ENCODE measurements at regions of chr21 and their contacts with region 1.

Region 1: GRCh38 chr21:43718872-43719747 is at the start of gene PDXK:
- DNase-seq: peak; percentile 82 to 85
- H3K4me3 ChIP-seq: peak within 1 kb of the TSS; percentile 27 to 99 (median 90)
- H3K27ac ChIP-seq: peak within 1 kb of the TSS; percentile 68 to 93 (median 90)
- H3K4me1 ChIP-seq: peaks cover 24 to 28% of the 10 kb centered on the region in 2 donors
- H3K27me3 ChIP-seq: no peaks in the 10 kb centered on the region
- CTCF ChIP-seq: no peak
- POLR2A ChIP-seq: peak; percentile 88 to 96
- total RNA-seq, gene PDXK: 70.6 to 95.5 (median 92.4) TPM

Region 2: GRCh38 chr21:43664358-43664757 is 54.8 kb before region 1 on chr21:
- intact Hi-C with region 1: loop called (anchors 5 kb)
- DNase-seq: no peak
- H3K4me3 ChIP-seq: no peak overlapping the region
- H3K27ac ChIP-seq: no peak overlapping the region
- H3K4me1 ChIP-seq: peaks cover 7 to 12% of the 10 kb centered on the region in 2 donors
- H3K27me3 ChIP-seq: no peaks in the 10 kb centered on the region
- CTCF ChIP-seq: no peak
- POLR2A ChIP-seq: no peak

Region 3: GRCh38 chr21:43789276-43790009 is 70.3 kb after region 1 on chr21 and contains the start of gene RRP1:
- intact Hi-C with region 1: loop called (anchors 5 kb)
- DNase-seq: peak; percentile 86 to 91
- H3K4me3 ChIP-seq: peak within 1 kb of the TSS; percentile 83 to 92 (median 88)
- H3K27ac ChIP-seq: peak within 1 kb of the TSS; percentile 90 to 96 (median 93)
- H3K4me1 ChIP-seq: peaks cover 10 to 12% of the 10 kb centered on the region in 2 donors
- H3K27me3 ChIP-seq: no peaks in the 10 kb centered on the region
- CTCF ChIP-seq: peak; percentile 38 to 100 (median 100)
- POLR2A ChIP-seq: peak in 1 of 2 donors; percentile 79
- total RNA-seq, gene RRP1: 11.0 to 20.1 (median 18.7) TPM